ENCODE measurements at regions of chr1 and their contacts with region 1.

Region 1: DNA sequence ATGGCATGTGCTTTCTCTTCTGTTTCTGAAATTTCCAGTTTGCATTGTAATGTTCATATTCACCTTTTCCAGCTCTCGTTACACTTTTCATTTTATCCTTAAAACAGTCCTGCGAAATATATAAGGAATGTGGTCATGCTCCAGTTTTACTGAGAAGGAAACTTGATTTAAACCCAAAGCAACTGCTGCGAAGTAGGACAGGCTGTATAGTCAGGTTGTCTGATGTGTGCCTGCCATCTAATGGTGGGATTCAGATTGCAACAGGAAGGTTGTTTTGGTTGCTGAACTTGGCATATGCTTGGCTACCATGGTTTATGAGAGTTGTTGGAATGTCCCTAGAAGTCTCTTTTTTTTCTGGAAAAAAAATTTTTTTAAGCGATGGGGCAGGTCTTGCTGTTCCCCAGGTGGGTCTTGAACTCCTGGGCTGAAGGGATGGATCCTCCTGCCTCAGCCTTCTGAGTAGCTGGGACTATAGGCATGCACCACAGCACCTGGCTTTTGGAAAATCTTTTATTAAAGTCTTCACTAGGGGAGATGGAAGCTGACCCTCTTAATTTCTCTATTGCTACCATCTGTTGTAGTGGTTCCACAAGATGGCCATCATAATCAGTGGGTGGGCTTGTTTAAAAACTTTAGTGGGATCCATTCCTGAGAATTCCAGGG is 86.9 kb downstream of the UCK2 start:
- DNase-seq: no peak
- ATAC-seq: peak; percentile 91

Region 2: GRCh38 chr1:165392634-165393571 is 521.4 kb before region 1 on chr1:
- intact Hi-C with region 1: loop called (anchors 10 kb)
- DNase-seq: peak; percentile 91
- ATAC-seq: peak; percentile 91

Region 3: GRCh38 chr1:165600793-165601192 is 313.5 kb before region 1 on chr1:
- intact Hi-C with region 1: loop called (anchors 2 kb)
- DNase-seq: no peak
- ATAC-seq: no peak

Region 4: GRCh38 chr1:165717918-165718515 is 196.2 kb before region 1 on chr1:
- intact Hi-C with region 1: loop called (anchors 5 kb)
- DNase-seq: no peak
- ATAC-seq: no peak

Region 5: DNA sequence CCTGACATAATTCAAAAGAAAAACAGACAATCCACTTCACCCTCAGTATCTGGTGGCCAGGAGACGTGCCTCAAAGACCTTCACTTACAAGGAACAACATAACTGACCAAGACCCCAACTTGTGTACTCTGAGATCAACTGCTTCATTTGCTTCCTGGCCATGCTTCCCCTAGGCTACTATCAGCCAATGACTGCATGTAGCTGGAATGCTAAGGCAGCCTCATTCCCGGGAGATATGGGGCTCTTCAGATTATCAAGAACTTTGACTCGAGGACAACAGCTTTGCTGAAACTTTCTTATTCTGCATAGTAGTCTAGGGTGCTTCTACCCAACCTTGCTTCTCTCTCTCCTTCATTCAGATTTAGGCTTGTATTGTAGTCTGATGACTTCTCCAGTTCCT is 98.5 kb before region 1 on chr1:
- intact Hi-C with region 1: no loop called
- DNase-seq: no peak
- ATAC-seq: peak; percentile 51

Region 6: GRCh38 chr1:166013232-166013631 is 99.0 kb after region 1 on chr1:
- intact Hi-C with region 1: no loop called
- DNase-seq: no peak
- ATAC-seq: no peak